ENCODE measurements at regions of chr15 and their contacts with region 1.

Region 1: DNA sequence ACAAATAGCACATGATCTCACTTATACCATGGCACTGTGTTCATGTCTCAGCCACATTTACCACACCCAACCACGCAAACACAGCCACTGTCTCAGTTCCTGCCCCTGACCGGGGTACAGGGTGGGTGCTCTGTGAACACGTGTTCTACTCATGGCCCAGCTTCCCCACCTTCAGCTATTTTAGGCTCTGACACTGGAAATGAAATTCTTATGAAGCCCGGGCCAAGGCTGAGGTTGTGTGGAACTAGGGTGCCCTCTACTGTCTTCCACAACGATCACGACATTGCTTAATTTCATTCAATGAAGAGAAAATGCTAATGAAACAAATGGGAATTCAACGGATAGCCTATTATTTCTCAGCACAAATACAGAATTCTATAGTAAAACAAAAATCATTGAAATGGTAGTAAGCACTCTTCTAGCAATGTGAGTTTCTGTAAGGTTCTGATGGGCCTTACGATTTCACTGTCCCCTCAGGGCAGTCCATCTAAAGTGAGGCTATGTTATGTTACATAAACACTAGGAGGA is 2.1 kb upstream of the GABRA5 start:
- DNase-seq: no peak
- ATAC-seq: peak; percentile 56

Region 2: GRCh38 chr15:25947323-25948314 is 917.1 kb before region 1 on chr15:
- intact Hi-C with region 1: loop called (anchors 10 kb)
- DNase-seq: no peak
- ATAC-seq: no peak

Region 3: DNA sequence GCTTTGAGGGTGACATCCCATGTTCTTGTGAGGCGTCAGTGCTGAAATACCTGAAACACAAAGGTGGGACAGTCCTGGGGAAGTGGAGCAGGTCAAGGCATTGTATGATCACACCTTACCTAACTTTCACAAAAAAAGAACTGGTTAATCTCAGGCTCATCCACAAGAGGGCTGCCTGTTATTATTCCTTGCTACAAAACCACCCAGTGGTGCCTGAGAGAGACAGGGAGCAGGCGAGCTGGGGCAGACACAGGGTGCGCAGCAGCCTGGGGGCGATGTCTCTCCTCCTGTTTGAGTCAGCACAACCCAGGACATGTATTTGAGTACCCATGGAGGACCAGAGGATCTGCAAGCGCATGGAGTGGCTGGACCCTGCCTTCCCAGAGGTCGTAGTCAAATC is 684.8 kb before region 1 on chr15:
- intact Hi-C with region 1: loop called (anchors 10 kb)
- DNase-seq: no peak
- ATAC-seq: peak; percentile 57

Region 4: GRCh38 chr15:26739791-26740190 is 124.9 kb before region 1 on chr15:
- intact Hi-C with region 1: no loop called
- DNase-seq: no peak
- ATAC-seq: no peak

Measured in Right ventricle myocardium inferior (tissue), 1 donor.